ENCODE measurements at regions of chr7 and their contacts with region 1.

Region 1: GRCh38 chr7:151838861-151839391 is 38.0 kb downstream of the PRKAG2 start:
- DNase-seq: peak; percentile 86
- ATAC-seq: peak; percentile 90
- H3K4me3 ChIP-seq: peak overlapping the region in 4 of 5 experiments; percentile 1 to 51 (median 30)
- H3K4me3 Mint-ChIP-seq: peak overlapping the region; percentile 89
- H3K27ac ChIP-seq: peak overlapping the region; percentile 59 to 78
- H3K27ac Mint-ChIP-seq: peak overlapping the region; percentile 92
- H3K4me1 ChIP-seq: peaks cover 32 to 47% of the 10 kb centered on the region in 2 donors
- H3K4me1 Mint-ChIP-seq: peaks cover 34% of the 10 kb centered on the region
- H3K27me3 ChIP-seq: no peaks in the 10 kb centered on the region
- H3K27me3 Mint-ChIP-seq: no peaks in the 10 kb centered on the region
- CTCF ChIP-seq: no peak

Region 2: DNA sequence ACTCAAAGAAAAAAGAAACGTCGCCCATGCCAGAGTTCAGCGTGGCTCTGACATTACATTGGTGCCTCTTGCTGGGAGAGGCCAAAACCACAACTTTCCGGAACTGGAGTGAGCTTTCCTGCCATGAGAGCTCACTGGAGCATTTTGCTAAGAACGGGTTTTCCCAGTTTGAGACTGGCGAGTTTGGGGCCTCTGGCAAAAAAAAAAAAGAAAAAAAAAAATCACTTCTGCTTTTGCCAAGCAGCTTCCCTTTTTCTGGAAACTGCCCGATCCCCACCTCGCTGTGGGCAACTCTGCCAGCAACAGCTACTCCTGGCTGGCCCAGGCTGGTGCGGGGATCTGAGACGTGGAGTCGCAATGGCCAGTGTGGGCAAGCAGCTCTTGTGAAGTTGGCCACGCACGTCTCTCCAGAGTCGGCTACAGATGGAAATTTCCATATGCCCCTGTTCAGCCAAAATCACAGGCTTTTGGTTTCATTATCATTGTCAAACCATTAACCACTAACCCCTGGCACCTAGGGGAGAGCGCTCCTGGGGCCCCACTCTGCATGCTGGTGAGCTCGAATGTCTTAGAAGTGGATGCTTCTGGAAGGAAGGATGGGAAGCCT is 12.3 kb after region 1 on chr7:
- CTCF ChIA-PET with region 1: interaction called, 6 read pairs
- POLR2A ChIA-PET with region 1: interaction called, 11 read pairs
- intact Hi-C with region 1: loop called (anchors 1 kb)
- DNase-seq: peak; percentile 79
- ATAC-seq: peak; percentile 71
- H3K4me3 ChIP-seq: peak overlapping the region; percentile 26 to 62 (median 53)
- H3K4me3 Mint-ChIP-seq: peak overlapping the region; percentile 89
- H3K27ac ChIP-seq: peak overlapping the region; percentile 44 to 54
- H3K27ac Mint-ChIP-seq: peak overlapping the region; percentile 82
- H3K4me1 ChIP-seq: peaks cover 21 to 31% of the 10 kb centered on the region in 2 donors
- H3K4me1 Mint-ChIP-seq: peaks cover 32% of the 10 kb centered on the region
- H3K27me3 ChIP-seq: no peaks in the 10 kb centered on the region
- H3K27me3 Mint-ChIP-seq: no peaks in the 10 kb centered on the region
- CTCF ChIP-seq: no peak

Region 3: GRCh38 chr7:151863386-151864079 is 24.6 kb after region 1 on chr7:
- CTCF ChIA-PET with region 1: no interaction called
- POLR2A ChIA-PET with region 1: no interaction called
- intact Hi-C with region 1: no loop called
- DNase-seq: no peak
- ATAC-seq: peak; percentile 31
- H3K4me3 ChIP-seq: no peak overlapping the region
- H3K4me3 Mint-ChIP-seq: no peak overlapping the region
- H3K27ac ChIP-seq: no peak overlapping the region
- H3K27ac Mint-ChIP-seq: peak overlapping the region; percentile 60
- H3K4me1 ChIP-seq: peaks cover 9 to 14% of the 10 kb centered on the region in 2 donors
- H3K4me1 Mint-ChIP-seq: peaks cover 26% of the 10 kb centered on the region
- H3K27me3 ChIP-seq: no peaks in the 10 kb centered on the region
- H3K27me3 Mint-ChIP-seq: no peaks in the 10 kb centered on the region
- CTCF ChIP-seq: no peak

Region 4: DNA sequence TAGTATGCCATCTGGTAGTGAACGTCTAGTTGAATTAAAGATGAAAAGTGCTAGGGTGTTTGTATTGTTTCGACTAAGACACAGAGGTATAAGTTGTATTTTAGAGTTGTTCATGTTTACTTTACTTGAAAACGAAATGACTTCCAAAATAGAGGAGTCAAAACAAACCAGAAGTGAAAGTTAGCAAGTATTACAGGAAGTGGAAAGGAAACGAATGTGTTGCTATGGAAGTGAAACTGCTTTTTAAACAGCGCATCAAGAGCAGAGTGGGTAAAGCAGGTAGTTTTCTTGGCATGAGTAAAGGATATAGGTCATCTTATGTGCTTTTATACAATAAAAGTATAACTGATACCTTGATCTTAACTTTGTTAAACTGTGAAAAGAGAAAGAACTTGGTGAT is 97.3 kb after region 1 on chr7:
- CTCF ChIA-PET with region 1: interaction called, 4 read pairs
- POLR2A ChIA-PET with region 1: no interaction called
- intact Hi-C with region 1: loop called (anchors 2 kb)
- DNase-seq: peak; percentile 82
- ATAC-seq: peak; percentile 81
- H3K4me3 ChIP-seq: peak overlapping the region in 3 of 5 experiments; percentile 6 to 48 (median 38)
- H3K4me3 Mint-ChIP-seq: peak overlapping the region; percentile 94
- H3K27ac ChIP-seq: peak overlapping the region; percentile 70 to 82
- H3K27ac Mint-ChIP-seq: peak overlapping the region; percentile 99
- H3K4me1 ChIP-seq: peaks cover 33 to 37% of the 10 kb centered on the region in 2 donors
- H3K4me1 Mint-ChIP-seq: peaks cover 39% of the 10 kb centered on the region
- H3K27me3 ChIP-seq: no peaks in the 10 kb centered on the region
- H3K27me3 Mint-ChIP-seq: peaks cover 4% of the 10 kb centered on the region
- CTCF ChIP-seq: no peak

Region 5: DNA sequence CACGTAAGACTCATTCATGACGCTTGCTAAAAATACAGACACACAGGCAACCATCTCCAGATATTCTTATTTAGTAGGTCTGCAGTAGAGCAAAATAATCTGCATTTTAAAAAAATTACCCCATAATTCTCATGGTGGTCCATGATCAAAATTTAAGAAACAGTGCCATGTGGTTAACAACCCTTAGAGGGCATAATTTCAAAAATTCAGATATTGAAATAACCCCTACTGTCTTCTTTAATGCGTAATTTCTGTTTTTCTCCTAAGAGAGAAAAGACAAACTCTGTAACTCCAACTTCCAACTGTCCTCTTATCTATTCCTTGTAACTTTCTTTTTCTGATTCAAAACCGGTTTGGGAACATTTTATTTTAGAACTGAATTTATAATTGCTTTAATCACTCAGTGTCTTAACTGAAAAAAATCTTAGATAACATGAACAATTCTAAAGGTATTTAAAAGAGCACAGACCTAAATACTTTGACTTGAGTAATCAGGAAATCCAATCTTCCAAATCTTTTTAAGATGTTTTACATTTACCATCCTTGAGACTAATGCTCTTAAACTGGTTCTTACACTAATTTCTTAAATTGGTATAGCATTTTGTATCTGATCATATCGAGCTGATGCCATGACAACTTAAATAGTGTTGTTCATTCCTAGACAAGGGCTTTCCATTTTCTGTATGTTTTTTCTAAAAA is 334.6 kb after region 1 on chr7:
- CTCF ChIA-PET with region 1: no interaction called
- POLR2A ChIA-PET with region 1: no interaction called
- intact Hi-C with region 1: no loop called
- DNase-seq: no peak
- ATAC-seq: no peak
- H3K4me3 ChIP-seq: no peak overlapping the region
- H3K4me3 Mint-ChIP-seq: no peak overlapping the region
- H3K27ac ChIP-seq: no peak overlapping the region
- H3K27ac Mint-ChIP-seq: no peak overlapping the region
- H3K4me1 ChIP-seq: peaks cover 12% of the 10 kb centered on the region in 2 donors
- H3K4me1 Mint-ChIP-seq: peaks cover 14% of the 10 kb centered on the region
- H3K27me3 ChIP-seq: no peaks in the 10 kb centered on the region
- H3K27me3 Mint-ChIP-seq: no peaks in the 10 kb centered on the region
- CTCF ChIP-seq: no peak

Measured in B cell (primary cell).